ENCODE measurements at regions of chr15 and their contacts with region 1.

Region 1: DNA sequence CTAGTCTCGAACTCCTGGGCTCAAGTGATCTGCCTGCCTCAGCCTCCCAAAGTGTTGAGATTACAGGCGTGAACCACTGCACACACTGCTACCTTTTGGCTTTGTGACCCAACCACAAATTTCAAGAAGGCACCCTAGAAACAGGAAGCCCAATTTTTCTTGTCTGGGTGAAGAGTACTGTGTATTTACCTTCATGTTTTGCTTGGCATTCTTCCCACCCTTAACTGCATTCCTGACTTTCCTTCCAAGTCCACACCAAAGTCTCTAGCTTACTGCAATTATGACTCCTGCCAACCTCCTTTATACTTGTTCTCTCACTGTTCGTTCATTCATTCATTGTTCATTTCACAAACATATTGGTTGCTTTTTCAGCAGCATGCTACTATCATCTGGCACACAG is 94.2 kb downstream of the ETFA start:
- H3K4me3 ChIP-seq: no peak overlapping the region
- H3K27ac ChIP-seq: no peak overlapping the region
- H3K4me1 ChIP-seq: peaks cover 18% of the 10 kb centered on the region
- CTCF ChIP-seq: no peak

Region 2: GRCh38 chr15:76190834-76191538 is 26.0 kb before region 1 on chr15:
- CTCF ChIA-PET with region 1: interaction called, 14 read pairs
- POLR2A ChIA-PET with region 1: interaction called, 4 read pairs
- H3K4me3 ChIP-seq: no peak overlapping the region
- H3K27ac ChIP-seq: peak overlapping the region; percentile 33; the same call in 1 of the 2 replicates
- H3K4me1 ChIP-seq: peaks cover 3% of the 10 kb centered on the region
- CTCF ChIP-seq: peak; percentile 94